Thyroid gland (tissue), 4 donors: ENCODE measurements at regions of chr20 and their contacts with region 1.

Region 1: GRCh38 chr20:38645980-38646858 is 44.6 kb downstream of the ARHGAP40 start:
- DNase-seq: peak; percentile 71 to 79
- H3K4me3 ChIP-seq: peak overlapping the region in 1 of 3 donors; percentile 8
- H3K27ac ChIP-seq: no peak overlapping the region
- H3K4me1 ChIP-seq: peaks cover 0 to 12% of the 10 kb centered on the region in 2 donors
- H3K27me3 ChIP-seq: peaks cover 4% of the 10 kb centered on the region
- CTCF ChIP-seq: peak; percentile 74 to 96 (median 90)
- POLR2A ChIP-seq: no peak

Region 2: GRCh38 chr20:38033310-38034107 is 612.7 kb before region 1 on chr20 and contains the starts of genes RPRD1B and TTI1:
- intact Hi-C with region 1: no loop called
- DNase-seq: peak; percentile 86 to 92
- H3K4me3 ChIP-seq: peak within 1 kb of the TSS; percentile 59 to 93 (median 89)
- H3K27ac ChIP-seq: peak within 1 kb of the TSS; percentile 91 to 94 (median 93)
- H3K4me1 ChIP-seq: peaks cover 14 to 46% of the 10 kb centered on the region in 2 donors
- H3K27me3 ChIP-seq: no peaks in the 10 kb centered on the region
- CTCF ChIP-seq: no peak
- POLR2A ChIP-seq: peak in 1 of 2 donors; percentile 69
- total RNA-seq, gene RPRD1B: 24.2 to 58.9 (median 27.0) TPM
- total RNA-seq, gene TTI1: 23.0 to 45.0 (median 30.1) TPM

Region 3: GRCh38 chr20:38395165-38395564 is 251.1 kb before region 1 on chr20:
- intact Hi-C with region 1: no loop called
- DNase-seq: no peak
- H3K4me3 ChIP-seq: no peak overlapping the region
- H3K27ac ChIP-seq: no peak overlapping the region
- H3K4me1 ChIP-seq: no peaks in the 10 kb centered on the region
- H3K27me3 ChIP-seq: no peaks in the 10 kb centered on the region
- CTCF ChIP-seq: no peak
- POLR2A ChIP-seq: no peak

Region 4: DNA sequence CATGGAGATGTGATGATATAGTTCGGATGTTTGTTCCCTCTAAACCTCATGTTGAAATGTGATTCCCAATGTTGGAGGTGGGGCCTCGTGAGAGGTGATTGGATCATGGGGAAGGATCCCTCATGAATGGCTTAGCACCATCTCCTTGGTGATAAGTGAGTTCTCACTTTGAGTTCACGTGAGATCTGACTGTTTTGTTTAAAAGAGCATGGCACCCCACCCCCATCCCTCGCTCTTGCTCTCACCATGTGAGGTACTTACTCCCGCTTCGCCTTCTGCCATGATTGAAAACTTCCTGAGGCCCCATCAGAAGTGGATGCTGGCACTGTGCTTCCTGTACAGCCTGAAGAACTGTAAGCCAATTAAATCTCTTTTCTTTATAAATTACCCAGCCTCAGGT is 89.0 kb after region 1 on chr20:
- intact Hi-C with region 1: loop called (anchors 5 kb)
- DNase-seq: no peak
- H3K4me3 ChIP-seq: no peak overlapping the region
- H3K27ac ChIP-seq: no peak overlapping the region
- H3K4me1 ChIP-seq: peaks cover 8 to 16% of the 10 kb centered on the region in 2 donors
- H3K27me3 ChIP-seq: peaks cover 23% of the 10 kb centered on the region
- CTCF ChIP-seq: no peak
- POLR2A ChIP-seq: no peak

Region 5: GRCh38 chr20:38751360-38751976 is 105.2 kb after region 1 on chr20:
- intact Hi-C with region 1: loop called (anchors 5 kb)
- DNase-seq: no peak
- H3K4me3 ChIP-seq: no peak overlapping the region
- H3K27ac ChIP-seq: no peak overlapping the region
- H3K4me1 ChIP-seq: peaks cover 13% of the 10 kb centered on the region in 2 donors
- H3K27me3 ChIP-seq: no peaks in the 10 kb centered on the region
- CTCF ChIP-seq: peak; percentile 18 to 62 (median 54)
- POLR2A ChIP-seq: no peak

Region 6: GRCh38 chr20:38893565-38894090 is 247.4 kb after region 1 on chr20:
- intact Hi-C with region 1: loop called (anchors 5 kb)
- DNase-seq: peak; percentile 52 to 58
- H3K4me3 ChIP-seq: no peak overlapping the region
- H3K27ac ChIP-seq: no peak overlapping the region
- H3K4me1 ChIP-seq: peaks cover 0 to 7% of the 10 kb centered on the region in 2 donors
- H3K27me3 ChIP-seq: no peaks in the 10 kb centered on the region
- CTCF ChIP-seq: peak; percentile 42 to 96 (median 70)
- POLR2A ChIP-seq: no peak